Activated CD4-positive, alpha-beta T cell treated with anti-CD3 and anti-CD28 coated beads, Interleukin-2, amount 10 ng/mL, durations not matched to agents 7 days and 5 days (primary cell): ENCODE measurements at regions of chr17 and their contacts with region 1.

Region 1: DNA sequence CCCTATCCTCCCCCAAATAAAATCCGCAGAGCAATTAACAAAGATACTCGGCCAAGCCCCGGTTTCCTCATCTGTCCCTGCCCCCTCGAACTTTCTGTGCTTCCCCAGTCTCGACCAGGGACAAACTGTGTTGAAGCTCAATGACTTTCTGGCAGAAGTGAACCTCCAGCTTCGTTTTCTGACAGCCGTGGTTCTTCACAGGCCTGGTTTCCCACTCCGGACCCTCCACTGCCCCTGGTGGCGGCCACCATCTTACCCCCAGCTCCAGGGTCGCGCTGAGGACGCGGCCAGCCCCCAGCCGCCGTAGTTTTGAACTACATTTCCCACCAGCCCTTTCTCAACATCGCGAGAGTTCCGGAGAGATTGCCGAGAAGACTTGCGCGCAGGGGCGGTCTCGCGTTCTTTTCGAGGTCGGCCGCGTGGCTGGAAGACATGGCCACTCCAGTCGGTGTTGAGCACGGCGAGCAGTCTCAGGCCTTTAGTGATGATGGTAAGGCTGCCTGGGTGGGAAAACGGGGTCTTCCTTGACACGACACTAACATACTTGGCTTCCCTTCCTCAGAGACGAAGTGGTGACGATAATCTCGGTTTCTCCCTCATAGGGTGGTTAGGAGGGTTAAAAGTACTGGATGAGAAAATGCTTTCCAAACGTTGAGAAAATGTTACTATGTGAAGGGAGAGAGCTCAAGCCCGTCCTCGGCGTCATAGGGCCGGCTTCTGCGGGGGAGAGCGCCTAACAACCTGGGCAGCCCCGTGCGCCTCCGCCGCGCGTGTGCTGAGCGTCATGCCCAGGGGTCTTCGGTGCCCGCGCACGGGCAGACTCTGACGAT is 17.7 kb downstream of the PRCD start:
- DNase-seq: peak; percentile 96
- H3K4me3 Mint-ChIP-seq: peak overlapping the region; percentile 89
- H3K27ac Mint-ChIP-seq: peak overlapping the region; percentile 94
- H3K4me1 Mint-ChIP-seq: peaks cover 52% of the 10 kb centered on the region
- H3K27me3 Mint-ChIP-seq: no peaks in the 10 kb centered on the region

Region 2: GRCh38 chr17:76529224-76530094 is 28.1 kb before region 1 on chr17:
- CTCF ChIA-PET with region 1: no interaction called
- POLR2A ChIA-PET with region 1: no interaction called
- DNase-seq: no peak
- H3K4me3 Mint-ChIP-seq: no peak overlapping the region
- H3K27ac Mint-ChIP-seq: no peak overlapping the region
- H3K4me1 Mint-ChIP-seq: peaks cover 16% of the 10 kb centered on the region
- H3K27me3 Mint-ChIP-seq: no peaks in the 10 kb centered on the region

Region 3: GRCh38 chr17:76567634-76568432 is 10.2 kb after region 1 on chr17:
- CTCF ChIA-PET with region 1: interaction called, 22 read pairs
- POLR2A ChIA-PET with region 1: no interaction called
- DNase-seq: no peak
- H3K4me3 Mint-ChIP-seq: no peak overlapping the region
- H3K27ac Mint-ChIP-seq: peak overlapping the region; percentile 50
- H3K4me1 Mint-ChIP-seq: peaks cover 15% of the 10 kb centered on the region
- H3K27me3 Mint-ChIP-seq: no peaks in the 10 kb centered on the region

Region 4: DNA sequence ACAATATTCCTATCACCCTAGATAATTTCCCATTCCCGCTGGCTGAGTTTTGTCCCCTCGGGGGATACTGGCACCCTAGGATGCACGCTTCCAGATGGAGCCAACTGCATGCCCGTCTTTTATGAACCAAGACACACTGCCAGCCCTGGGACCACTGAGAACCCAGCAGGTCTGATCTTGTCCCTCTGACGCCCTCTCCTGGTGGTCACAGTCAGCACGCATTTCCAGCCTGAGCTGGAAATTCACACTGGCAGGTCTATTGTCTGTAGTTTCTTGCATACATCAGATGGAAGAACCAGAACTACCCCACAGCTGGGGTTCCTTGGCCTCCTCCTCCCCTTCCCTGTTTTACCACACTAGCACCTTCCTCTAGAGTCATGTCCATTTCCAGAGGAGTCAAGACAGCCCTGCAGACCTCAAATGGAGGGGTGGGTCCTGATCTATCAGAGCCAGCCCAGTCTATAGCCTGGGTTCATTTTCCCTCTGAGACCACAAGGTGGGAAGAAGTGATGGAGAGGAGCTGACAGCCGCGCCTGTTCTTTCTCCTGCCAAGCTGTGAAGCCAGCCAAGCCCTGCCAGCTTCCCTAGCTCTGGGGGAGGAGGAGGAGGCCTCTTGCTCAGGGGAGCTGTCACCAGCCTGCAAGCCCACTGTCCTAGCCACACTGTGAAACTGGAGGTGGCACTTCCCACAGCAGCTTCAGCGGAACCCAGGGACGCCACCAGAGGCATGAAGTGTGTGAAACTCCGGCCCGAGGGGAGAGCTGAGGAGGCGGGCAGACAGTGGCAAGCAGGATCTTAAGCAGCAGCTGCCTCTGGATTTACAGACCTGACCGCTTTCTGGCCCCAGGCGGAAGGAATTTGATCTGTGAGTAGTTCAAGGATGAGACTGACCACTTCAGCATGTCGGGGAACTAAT is 123.9 kb after region 1 on chr17:
- CTCF ChIA-PET with region 1: interaction called, 12 read pairs
- POLR2A ChIA-PET with region 1: no interaction called
- DNase-seq: peak; percentile 83
- H3K4me3 Mint-ChIP-seq: no peak overlapping the region
- H3K27ac Mint-ChIP-seq: peak overlapping the region; percentile 62
- H3K4me1 Mint-ChIP-seq: peaks cover 6% of the 10 kb centered on the region
- H3K27me3 Mint-ChIP-seq: no peaks in the 10 kb centered on the region